CD8-positive, alpha-beta T cell (primary cell): ENCODE measurements at regions of chr2 and their contacts with region 1.

Region 1: DNA sequence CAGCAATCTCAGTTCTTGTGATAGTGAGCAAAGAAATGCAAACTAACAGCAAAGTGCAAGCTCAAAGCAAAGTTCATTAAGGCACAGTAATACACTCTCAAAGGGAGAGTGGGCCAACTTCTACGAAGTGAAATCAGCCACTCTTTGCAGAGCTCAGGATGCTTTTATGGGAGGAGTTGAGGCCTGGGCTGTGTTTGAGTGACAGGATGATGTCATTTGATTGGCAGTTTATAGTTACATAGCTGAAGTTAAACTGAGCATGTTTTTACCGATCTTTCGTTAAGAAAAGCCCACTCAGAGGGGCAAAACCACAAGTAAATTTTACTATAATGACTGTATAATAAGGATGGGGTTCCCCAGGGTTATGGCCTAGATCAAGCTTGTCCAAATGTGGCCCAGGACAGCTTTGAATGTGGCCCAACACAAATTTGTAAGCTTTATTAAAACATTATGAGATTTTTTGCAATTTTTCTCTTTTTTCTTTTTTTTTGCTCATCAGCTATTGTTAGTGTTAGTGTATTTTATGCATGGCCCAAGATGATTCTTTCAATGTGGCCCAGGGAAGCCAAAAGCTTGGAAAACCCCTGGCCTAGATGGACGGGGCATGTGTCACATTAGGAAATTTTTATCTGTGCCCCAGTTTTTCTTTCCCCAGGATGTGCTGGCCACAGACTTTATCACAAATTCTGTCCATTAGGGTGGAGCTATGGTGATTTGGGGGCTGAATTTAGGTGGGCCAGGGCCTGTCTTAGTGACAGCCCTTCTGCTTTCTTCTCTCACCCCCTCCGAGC is 8.3 kb upstream of the DNAH7 start:
- DNase-seq: no peak
- ATAC-seq: no peak
- H3K4me3 ChIP-seq: no peak overlapping the region
- H3K4me3 Mint-ChIP-seq: no peak overlapping the region
- H3K27ac ChIP-seq: no peak overlapping the region
- H3K27ac Mint-ChIP-seq: no peak overlapping the region
- H3K4me1 ChIP-seq: peaks cover 13% of the 10 kb centered on the region
- H3K4me1 Mint-ChIP-seq: peaks cover 23% of the 10 kb centered on the region
- H3K27me3 ChIP-seq: no peaks in the 10 kb centered on the region
- H3K27me3 Mint-ChIP-seq: no peaks in the 10 kb centered on the region
- CTCF ChIP-seq: no peak

Region 2: DNA sequence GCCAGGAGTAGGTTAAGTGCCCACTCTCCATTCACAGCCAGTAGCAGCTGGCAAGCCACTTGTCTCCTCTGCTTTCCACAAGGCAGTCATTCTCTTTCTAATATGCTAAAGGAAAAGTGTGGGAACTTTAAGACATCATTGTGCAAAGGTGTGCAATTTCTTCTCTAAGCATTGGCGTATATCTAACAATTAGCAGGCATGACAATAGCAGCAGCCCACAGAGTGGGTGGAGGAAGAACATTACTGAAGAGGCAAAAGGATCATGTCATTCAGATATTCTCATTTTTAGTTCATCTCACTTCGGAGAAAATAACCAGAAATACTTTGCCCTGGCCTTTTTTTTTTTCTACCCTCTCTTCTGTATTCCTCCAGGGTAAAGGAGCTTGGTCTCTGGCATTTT is 185.9 kb before region 1 on chr2:
- CTCF ChIA-PET with region 1: no interaction called
- POLR2A ChIA-PET with region 1: no interaction called
- intact Hi-C with region 1: no loop called
- DNase-seq: no peak
- ATAC-seq: no peak
- H3K4me3 ChIP-seq: no peak overlapping the region
- H3K4me3 Mint-ChIP-seq: no peak overlapping the region
- H3K27ac ChIP-seq: no peak overlapping the region
- H3K27ac Mint-ChIP-seq: no peak overlapping the region
- H3K4me1 ChIP-seq: no peaks in the 10 kb centered on the region
- H3K4me1 Mint-ChIP-seq: no peaks in the 10 kb centered on the region
- H3K27me3 ChIP-seq: no peaks in the 10 kb centered on the region
- H3K27me3 Mint-ChIP-seq: no peaks in the 10 kb centered on the region
- CTCF ChIP-seq: no peak

Region 3: DNA sequence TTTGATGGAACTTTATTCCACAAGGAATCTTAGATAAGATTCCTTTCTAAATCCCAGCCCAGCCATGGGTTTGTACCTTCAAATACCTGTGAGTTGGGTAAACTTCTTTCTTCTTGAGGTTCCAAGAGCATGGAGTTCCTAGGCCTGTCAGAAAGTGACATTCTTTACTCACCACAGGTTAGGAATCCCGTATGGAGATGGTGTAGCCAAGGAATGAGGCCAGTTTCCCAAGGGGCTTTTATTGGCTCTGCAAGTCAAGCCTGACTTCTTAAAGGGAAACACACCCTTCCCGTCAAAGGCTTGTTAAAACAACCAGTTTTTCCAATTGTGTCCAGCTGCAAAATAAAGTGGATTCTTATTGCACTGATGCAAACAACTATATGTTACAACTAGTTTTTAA is 48.6 kb after region 1 on chr2:
- CTCF ChIA-PET with region 1: interaction called, 4 read pairs
- POLR2A ChIA-PET with region 1: interaction called, 3 read pairs
- intact Hi-C with region 1: loop called in 1 of 2 experiments (anchors 5 kb)
- DNase-seq: no peak
- ATAC-seq: no peak
- H3K4me3 ChIP-seq: no peak overlapping the region
- H3K4me3 Mint-ChIP-seq: no peak overlapping the region
- H3K27ac ChIP-seq: no peak overlapping the region
- H3K27ac Mint-ChIP-seq: no peak overlapping the region
- H3K4me1 ChIP-seq: no peaks in the 10 kb centered on the region
- H3K4me1 Mint-ChIP-seq: no peaks in the 10 kb centered on the region
- H3K27me3 ChIP-seq: no peaks in the 10 kb centered on the region
- H3K27me3 Mint-ChIP-seq: no peaks in the 10 kb centered on the region
- CTCF ChIP-seq: no peak

Region 4: DNA sequence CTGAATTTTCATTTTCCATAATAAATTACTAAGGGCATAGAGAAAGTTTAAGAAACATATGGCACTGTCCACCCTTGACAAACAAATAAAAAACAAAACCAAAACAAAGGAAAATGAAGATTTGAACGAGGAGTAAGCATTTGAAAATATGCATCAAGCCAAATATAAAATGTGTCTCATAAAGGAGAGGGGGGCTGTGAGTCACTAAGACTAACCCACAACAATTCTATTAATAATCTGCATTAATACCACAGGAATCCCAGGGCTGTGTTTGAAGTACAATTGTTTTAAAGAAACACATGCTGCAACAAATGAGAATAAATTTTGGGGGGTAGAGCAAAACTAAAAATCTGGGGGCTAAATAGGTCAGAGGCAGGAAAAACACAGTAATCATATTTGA is 148.2 kb after region 1 on chr2:
- CTCF ChIA-PET with region 1: interaction called, 127 read pairs
- POLR2A ChIA-PET with region 1: interaction called, 12 read pairs
- intact Hi-C with region 1: loop called (anchors 1 to 2 kb)
- DNase-seq: no peak
- ATAC-seq: no peak
- H3K4me3 ChIP-seq: no peak overlapping the region
- H3K4me3 Mint-ChIP-seq: peak overlapping the region; percentile 8
- H3K27ac ChIP-seq: no peak overlapping the region
- H3K27ac Mint-ChIP-seq: peak overlapping the region; percentile 25
- H3K4me1 ChIP-seq: peaks cover 61% of the 10 kb centered on the region
- H3K4me1 Mint-ChIP-seq: peaks cover 78% of the 10 kb centered on the region
- H3K27me3 ChIP-seq: no peaks in the 10 kb centered on the region
- H3K27me3 Mint-ChIP-seq: no peaks in the 10 kb centered on the region
- CTCF ChIP-seq: no peak

Region 5: GRCh38 chr2:196268538-196269338 is 191.8 kb after region 1 on chr2:
- CTCF ChIA-PET with region 1: interaction called, 11 read pairs
- POLR2A ChIA-PET with region 1: no interaction called
- intact Hi-C with region 1: no loop called
- DNase-seq: peak in 1 of 9 experiments; percentile 49
- ATAC-seq: peak; percentile 39
- H3K4me3 ChIP-seq: peak overlapping the region in 1 of 2 experiments; percentile 21
- H3K4me3 Mint-ChIP-seq: peak overlapping the region; percentile 59
- H3K27ac ChIP-seq: peak overlapping the region in 1 of 2 experiments; percentile 41
- H3K27ac Mint-ChIP-seq: peak overlapping the region; percentile 84
- H3K4me1 ChIP-seq: peaks cover 48% of the 10 kb centered on the region
- H3K4me1 Mint-ChIP-seq: peaks cover 56% of the 10 kb centered on the region
- H3K27me3 ChIP-seq: no peaks in the 10 kb centered on the region
- H3K27me3 Mint-ChIP-seq: no peaks in the 10 kb centered on the region
- CTCF ChIP-seq: no peak

Region 6: GRCh38 chr2:196453613-196454047 is 376.7 kb after region 1 on chr2:
- CTCF ChIA-PET with region 1: interaction called, 33 read pairs
- POLR2A ChIA-PET with region 1: interaction called, 3 read pairs
- intact Hi-C with region 1: loop called (anchors 1 kb)
- DNase-seq: peak in 6 of 9 experiments; percentile 3 to 64 (median 31)
- ATAC-seq: no peak
- H3K4me3 ChIP-seq: no peak overlapping the region
- H3K4me3 Mint-ChIP-seq: no peak overlapping the region
- H3K27ac ChIP-seq: no peak overlapping the region
- H3K27ac Mint-ChIP-seq: no peak overlapping the region
- H3K4me1 ChIP-seq: no peaks in the 10 kb centered on the region
- H3K4me1 Mint-ChIP-seq: peaks cover 2% of the 10 kb centered on the region
- H3K27me3 ChIP-seq: peaks cover 0 to 7% of the 10 kb centered on the region in 2 experiments
- H3K27me3 Mint-ChIP-seq: peaks cover 21% of the 10 kb centered on the region
- CTCF ChIP-seq: no peak